Activated naive CD4-positive, alpha-beta T cell treated with anti-CD3 and anti-CD28 coated beads for 36 hours (primary cell): ENCODE measurements at regions of chr6 and their contacts with region 1.

Region 1: DNA sequence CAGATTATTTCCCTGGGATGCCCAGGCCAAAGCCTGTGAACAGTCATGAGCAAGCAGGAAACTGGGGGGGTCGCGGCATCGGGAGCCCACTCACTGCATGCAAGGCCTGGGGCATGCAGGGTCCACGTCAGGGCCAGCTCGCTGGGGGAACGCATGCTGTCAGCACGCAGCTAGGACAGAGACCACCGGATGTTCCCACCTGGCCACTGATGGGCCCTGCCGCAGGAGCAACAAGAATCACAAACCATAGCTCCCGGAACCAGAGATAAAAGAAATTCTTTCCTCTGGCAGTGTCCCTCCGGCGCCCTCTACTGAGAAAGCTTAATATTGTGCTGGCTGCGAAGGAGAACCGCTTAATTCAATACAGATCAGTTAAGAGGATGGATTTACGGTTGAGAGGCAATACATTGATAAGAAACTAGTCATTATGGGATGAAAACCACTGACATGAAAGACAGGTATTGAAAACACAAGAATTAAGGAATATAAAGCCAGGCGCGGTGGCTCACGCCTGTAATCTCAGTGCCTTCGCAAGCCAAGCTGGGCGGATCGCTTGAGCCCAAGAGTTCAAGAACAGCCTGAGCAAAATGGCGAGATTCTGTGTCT is 32.6 kb downstream of the C6orf15 start:
- DNase-seq: peak; percentile 86
- H3K4me3 Mint-ChIP-seq: peak overlapping the region; percentile 32
- H3K27ac Mint-ChIP-seq: no peak overlapping the region
- H3K4me1 Mint-ChIP-seq: peaks cover 8% of the 10 kb centered on the region
- H3K27me3 Mint-ChIP-seq: no peaks in the 10 kb centered on the region

Region 2: DNA sequence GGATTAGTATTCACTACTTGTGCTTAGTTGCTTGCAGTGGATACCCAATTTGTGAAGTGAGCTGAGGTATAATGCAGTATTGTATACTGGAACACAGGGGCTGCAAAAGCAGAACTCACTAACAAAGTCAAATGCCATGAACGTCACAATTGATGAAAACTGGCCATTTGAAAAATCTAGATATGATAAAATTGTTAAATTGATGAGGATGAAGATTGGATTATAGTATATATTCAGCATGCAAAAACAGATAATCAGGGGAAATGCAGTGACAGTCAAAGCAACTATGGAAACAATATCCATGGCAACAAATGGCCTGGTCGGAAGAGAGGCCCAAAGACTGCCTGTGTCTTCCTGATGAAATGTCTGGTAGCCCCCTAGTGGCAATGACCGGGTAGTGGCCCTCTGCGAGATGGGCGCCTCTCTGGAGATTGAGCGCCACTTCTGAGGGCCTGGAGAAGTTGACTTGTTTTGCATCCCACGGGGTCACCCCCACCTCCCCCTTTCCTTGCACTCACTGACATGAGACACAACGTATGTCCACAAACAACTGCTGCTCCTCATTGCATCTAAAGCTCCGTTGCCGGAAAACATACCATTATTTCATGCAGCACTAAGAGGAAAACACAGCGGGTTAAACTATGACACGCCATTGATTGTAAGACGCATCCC is 11.0 kb before region 1 on chr6:
- CTCF ChIA-PET with region 1: interaction called, 26 read pairs
- intact Hi-C with region 1: no loop called
- DNase-seq: peak; percentile 84
- H3K4me3 Mint-ChIP-seq: no peak overlapping the region
- H3K27ac Mint-ChIP-seq: no peak overlapping the region
- H3K4me1 Mint-ChIP-seq: no peaks in the 10 kb centered on the region
- H3K27me3 Mint-ChIP-seq: no peaks in the 10 kb centered on the region

Region 3: GRCh38 chr6:31094389-31094881 is 14.7 kb after region 1 on chr6:
- CTCF ChIA-PET with region 1: interaction called, 31 read pairs
- intact Hi-C with region 1: no loop called
- DNase-seq: peak; percentile 75
- H3K4me3 Mint-ChIP-seq: no peak overlapping the region
- H3K27ac Mint-ChIP-seq: peak overlapping the region; percentile 81
- H3K4me1 Mint-ChIP-seq: peaks cover 36% of the 10 kb centered on the region
- H3K27me3 Mint-ChIP-seq: no peaks in the 10 kb centered on the region

Region 4: GRCh38 chr6:31113861-31114539 is 34.2 kb after region 1 on chr6:
- CTCF ChIA-PET with region 1: no interaction called
- intact Hi-C with region 1: no loop called
- DNase-seq: no peak
- H3K4me3 Mint-ChIP-seq: no peak overlapping the region
- H3K27ac Mint-ChIP-seq: no peak overlapping the region
- H3K4me1 Mint-ChIP-seq: peaks cover 5% of the 10 kb centered on the region
- H3K27me3 Mint-ChIP-seq: no peaks in the 10 kb centered on the region